ENCODE measurements at regions of chr2 and their contacts with region 1.

Region 1: GRCh38 chr2:113138428-113139322 is 11.3 kb downstream of the IL1RN start:
- DNase-seq: peak; percentile 53 to 66
- H3K4me3 ChIP-seq: peak overlapping the region; percentile 24; the same call in 1 of the 2 replicates
- H3K27ac ChIP-seq: no peak overlapping the region
- H3K4me1 ChIP-seq: peaks cover 10% of the 10 kb centered on the region
- H3K27me3 ChIP-seq: no peaks in the 10 kb centered on the region
- CTCF ChIP-seq: peak; percentile 88

Region 2: DNA sequence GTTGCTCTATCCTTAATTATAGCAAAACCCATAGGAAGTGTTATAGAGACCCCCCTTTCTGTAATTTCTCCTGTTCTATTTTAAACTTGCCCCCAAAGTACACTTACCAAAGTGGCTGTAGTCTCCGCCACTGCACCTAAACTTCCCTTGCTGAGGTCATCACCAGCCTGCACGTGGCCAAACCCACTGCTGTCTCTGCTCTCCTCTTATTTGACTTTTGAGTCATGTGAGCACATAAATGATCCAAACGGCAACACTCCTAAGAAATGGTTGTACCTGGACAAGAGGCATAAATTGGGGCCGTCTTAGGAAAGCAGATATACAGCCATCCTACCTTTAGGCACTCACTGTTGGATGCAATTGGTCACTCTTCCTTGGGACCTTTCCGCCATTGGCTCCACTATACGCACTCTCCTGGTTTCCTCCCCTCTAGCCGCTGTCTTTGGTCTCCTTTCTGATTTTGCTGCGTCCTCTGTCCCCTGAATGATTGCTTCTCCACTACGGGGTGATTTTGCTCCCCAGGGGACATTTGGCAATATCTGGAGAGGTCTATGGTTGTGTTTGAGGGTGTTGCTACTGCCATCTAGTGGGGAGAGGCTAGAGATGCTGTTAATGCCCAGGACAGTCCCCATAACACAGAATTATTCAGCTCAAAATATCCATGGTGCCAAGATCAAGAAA is 180.1 kb before region 1 on chr2:
- CTCF ChIA-PET with region 1: no interaction called
- POLR2A ChIA-PET with region 1: no interaction called
- intact Hi-C with region 1: loop called (anchors 5 kb)
- DNase-seq: peak in 1 of 2 experiments; percentile 40
- H3K4me3 ChIP-seq: no peak overlapping the region
- H3K27ac ChIP-seq: no peak overlapping the region
- H3K4me1 ChIP-seq: peaks cover 7% of the 10 kb centered on the region; the same call in 1 of the 2 replicates
- H3K27me3 ChIP-seq: no peaks in the 10 kb centered on the region
- CTCF ChIP-seq: peak; percentile 93

Region 3: DNA sequence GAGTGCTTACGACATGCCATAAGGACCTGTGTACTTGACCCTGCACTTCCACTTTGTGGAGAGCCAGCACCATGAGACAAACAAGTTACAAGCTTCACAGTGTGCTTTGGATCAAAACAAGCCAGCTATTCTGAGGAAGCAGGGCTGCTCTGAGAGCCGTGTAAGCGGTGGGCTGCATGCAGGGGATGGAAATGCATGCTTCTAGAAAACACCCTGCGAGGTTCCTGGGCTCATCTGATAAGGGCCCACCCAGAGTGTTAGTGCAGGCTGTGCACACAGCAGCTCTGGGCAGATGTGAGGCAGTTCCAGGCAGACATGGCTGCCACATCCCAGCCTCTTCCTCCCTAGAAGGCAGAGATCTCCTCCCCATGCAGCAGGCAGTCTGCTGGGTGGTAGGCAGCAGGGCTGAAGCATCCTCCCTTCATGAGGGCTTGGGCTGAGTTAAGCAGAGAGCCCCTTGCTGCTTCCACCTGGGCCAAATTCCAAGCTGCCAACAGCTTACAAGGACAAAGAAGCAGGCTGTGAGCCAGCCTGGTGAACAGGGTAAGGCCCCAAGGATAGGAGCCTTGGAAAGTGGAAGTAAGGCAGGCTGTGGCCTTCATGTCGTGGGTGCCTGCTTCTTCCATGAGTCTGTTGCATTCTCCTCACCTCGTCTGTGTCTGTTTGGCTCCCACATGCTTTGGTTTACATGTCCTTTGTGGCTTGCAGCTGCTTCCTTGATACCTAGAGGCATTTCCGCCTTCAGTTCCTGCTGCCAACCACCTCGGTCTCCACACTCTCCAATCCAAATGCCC is 42.8 kb after region 1 on chr2:
- CTCF ChIA-PET with region 1: interaction called, 13 read pairs
- POLR2A ChIA-PET with region 1: no interaction called
- intact Hi-C with region 1: no loop called
- DNase-seq: no peak
- H3K4me3 ChIP-seq: no peak overlapping the region
- H3K27ac ChIP-seq: no peak overlapping the region
- H3K4me1 ChIP-seq: no peaks in the 10 kb centered on the region
- H3K27me3 ChIP-seq: no peaks in the 10 kb centered on the region
- CTCF ChIP-seq: no peak

Region 4: GRCh38 chr2:113203901-113204519 is 65.3 kb after region 1 on chr2:
- CTCF ChIA-PET with region 1: interaction called, 66 read pairs
- POLR2A ChIA-PET with region 1: no interaction called
- intact Hi-C with region 1: loop called (anchors 1 kb)
- DNase-seq: peak; percentile 64 to 79
- H3K4me3 ChIP-seq: no peak overlapping the region
- H3K27ac ChIP-seq: no peak overlapping the region
- H3K4me1 ChIP-seq: peaks cover 6% of the 10 kb centered on the region; the same call in 1 of the 2 replicates
- H3K27me3 ChIP-seq: no peaks in the 10 kb centered on the region
- CTCF ChIP-seq: peak; percentile 94

Region 5: DNA sequence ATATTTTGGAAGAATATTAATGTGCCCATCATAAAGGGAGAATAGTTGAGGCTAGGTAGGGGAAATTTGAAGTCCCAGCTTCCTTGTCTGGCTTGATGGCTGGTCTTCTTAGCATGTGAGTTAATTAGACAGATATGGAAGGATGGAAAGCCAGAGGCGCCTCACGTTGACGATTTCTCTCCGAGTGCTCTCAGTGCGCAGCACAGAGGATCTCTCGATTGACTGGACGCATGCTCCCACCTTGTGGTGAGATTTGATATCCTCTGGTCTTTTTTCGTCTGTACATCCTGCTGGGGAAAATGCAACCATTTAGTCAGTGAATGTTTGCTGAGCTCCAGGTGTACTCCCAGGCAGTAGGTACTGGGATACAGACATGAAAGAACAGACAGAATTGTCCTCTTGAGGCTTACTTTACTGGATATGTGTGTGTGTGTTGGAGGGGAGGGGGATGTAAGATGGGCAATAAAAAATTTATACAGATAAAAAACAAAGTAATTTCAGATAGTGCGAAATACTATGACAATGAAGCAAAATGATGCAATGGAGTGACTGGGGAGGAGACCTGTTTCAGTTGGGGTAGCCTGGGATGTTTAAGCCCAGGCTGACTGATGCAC is 231.9 kb after region 1 on chr2:
- CTCF ChIA-PET with region 1: no interaction called
- POLR2A ChIA-PET with region 1: no interaction called
- intact Hi-C with region 1: loop called (anchors 1 kb)
- DNase-seq: peak; percentile 69 to 73
- H3K4me3 ChIP-seq: no peak overlapping the region
- H3K27ac ChIP-seq: no peak overlapping the region
- H3K4me1 ChIP-seq: peaks cover 12% of the 10 kb centered on the region
- H3K27me3 ChIP-seq: no peaks in the 10 kb centered on the region
- CTCF ChIP-seq: peak; percentile 75

Region 6: GRCh38 chr2:113685471-113685870 is 546.8 kb after region 1 on chr2:
- CTCF ChIA-PET with region 1: no interaction called
- POLR2A ChIA-PET with region 1: no interaction called
- intact Hi-C with region 1: no loop called
- DNase-seq: no peak
- H3K4me3 ChIP-seq: no peak overlapping the region
- H3K27ac ChIP-seq: no peak overlapping the region
- H3K4me1 ChIP-seq: peaks cover 7% of the 10 kb centered on the region; the same call in 1 of the 2 replicates
- H3K27me3 ChIP-seq: no peaks in the 10 kb centered on the region
- CTCF ChIP-seq: no peak

Measured in PC-9 (cell line).